ENCODE measurements at regions of chr3 and their contacts with region 1.

Region 1: GRCh38 chr3:41881233-41881821 is 80.6 kb downstream of the ULK4 start:
- DNase-seq: peak; percentile 23
- ATAC-seq: no peak
- H3K4me3 ChIP-seq: no peak overlapping the region
- H3K27ac ChIP-seq: no peak overlapping the region
- H3K4me1 ChIP-seq: no peaks in the 10 kb centered on the region
- H3K27me3 ChIP-seq: no peaks in the 10 kb centered on the region
- CTCF ChIP-seq: peak; percentile 68
- EP300 ChIP-seq: no peak
- POLR2A ChIP-seq: no peak
- RAD21 ChIP-seq: peak; percentile 48; the same call in 1 of the 2 replicates

Region 2: DNA sequence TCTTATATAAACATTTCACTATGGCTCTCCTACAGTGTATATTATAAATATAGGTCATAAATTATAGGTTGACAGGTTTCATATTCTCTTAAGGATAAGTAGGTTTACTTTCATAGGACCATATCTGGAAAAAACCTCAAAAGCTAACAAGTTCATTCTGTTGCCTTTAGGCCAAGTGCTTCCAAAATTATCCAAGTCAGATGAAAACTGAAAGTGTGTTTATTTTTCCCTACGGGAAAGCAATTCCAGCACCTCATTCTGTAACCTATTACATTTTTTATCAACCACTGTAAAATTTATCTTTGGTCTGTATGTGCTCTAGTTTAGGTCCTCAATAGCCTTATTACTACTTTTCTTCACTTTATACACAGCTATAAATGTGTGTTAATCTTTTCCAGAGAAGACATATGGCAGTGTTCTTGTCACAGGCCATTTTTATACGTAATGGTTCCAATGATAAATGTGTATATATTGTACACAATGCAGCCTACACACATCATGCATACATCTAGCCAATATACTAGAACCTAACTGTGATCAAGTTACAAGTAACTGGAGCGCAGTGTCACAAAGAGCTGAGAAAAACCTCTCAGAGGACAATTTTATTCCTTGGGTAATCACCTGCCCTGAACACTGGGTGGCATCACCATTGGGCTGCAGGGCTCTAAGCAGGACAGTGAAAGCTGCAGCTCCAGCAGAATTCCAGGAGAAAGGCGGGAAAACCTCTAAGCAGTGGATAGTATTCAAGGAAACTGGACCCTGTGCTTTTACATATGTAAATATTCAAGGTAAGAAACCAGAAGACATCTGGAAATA is 430.7 kb before region 1 on chr3:
- CTCF ChIA-PET with region 1: no interaction called
- POLR2A ChIA-PET with region 1: no interaction called
- in situ Hi-C with region 1: no loop called
- intact Hi-C with region 1: loop called (anchors 2 kb)
- DNase-seq: no peak
- ATAC-seq: peak; percentile 66
- H3K4me3 ChIP-seq: no peak overlapping the region
- H3K27ac ChIP-seq: no peak overlapping the region
- H3K4me1 ChIP-seq: no peaks in the 10 kb centered on the region
- H3K27me3 ChIP-seq: no peaks in the 10 kb centered on the region
- CTCF ChIP-seq: no peak
- EP300 ChIP-seq: no peak
- POLR2A ChIP-seq: no peak
- RAD21 ChIP-seq: no peak